SK-MEL-5 (cell line): ENCODE measurements at regions of chr21 and their contacts with region 1.

Region 1: GRCh38 chr21:41612674-41613532 is 104.9 kb upstream of the TMPRSS2 start:
- DNase-seq: peak; percentile 74

Region 2: DNA sequence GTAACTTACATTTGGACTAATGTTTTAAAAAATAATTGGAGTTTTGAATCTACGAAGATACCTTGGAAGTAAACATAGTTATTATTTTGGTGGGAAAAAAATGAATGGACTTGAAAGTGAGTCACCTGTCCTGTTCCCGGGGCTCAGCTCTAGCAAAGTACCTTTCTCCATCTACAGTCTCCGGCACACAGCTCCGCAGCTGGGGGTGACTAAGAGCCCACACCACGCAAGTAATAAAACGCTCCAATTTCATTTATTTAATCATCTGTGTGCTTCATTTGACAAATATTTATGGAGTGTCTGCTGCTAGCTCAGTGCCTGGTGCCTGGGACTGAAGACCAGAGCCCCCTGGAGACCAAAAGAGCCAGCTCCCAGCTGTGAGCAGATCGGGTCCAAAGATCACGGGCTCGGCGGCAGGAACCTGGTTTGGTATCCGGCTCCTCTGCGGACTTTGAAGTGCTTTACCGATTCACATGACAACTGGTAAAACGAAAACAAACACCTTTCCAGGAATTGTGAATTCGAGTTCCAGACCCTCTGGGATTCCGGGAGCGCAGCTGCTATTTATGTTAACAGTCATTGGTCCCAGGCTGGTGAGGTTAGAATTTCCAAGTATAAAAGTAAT is 155.6 kb after region 1 on chr21:
- in situ Hi-C with region 1: loop called (anchors 25 kb)
- DNase-seq: no peak